BJ (cell line): ENCODE measurements at regions of chr5 and their contacts with region 1.

Region 1: DNA sequence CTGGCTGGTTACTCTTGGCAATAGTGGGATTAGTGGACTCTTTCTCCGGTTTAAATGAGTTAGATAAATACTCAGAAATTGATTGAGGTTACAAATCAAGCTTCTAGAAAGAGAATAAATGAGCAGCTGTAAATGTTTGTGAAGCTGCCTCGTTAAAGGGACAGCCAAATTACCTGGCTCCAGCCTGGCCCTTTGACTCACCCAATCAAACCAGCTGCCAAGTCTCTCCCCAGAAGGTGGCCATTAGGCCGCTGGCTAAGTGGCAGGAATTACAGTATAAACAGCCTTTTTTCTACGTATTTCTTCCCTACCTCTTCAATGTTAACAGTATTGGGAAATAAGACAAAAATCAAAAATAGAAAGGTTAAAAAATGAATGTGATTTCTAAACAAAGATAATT is 46.0 kb upstream of the SRFBP1 start:
- DNase-seq: no peak
- H3K4me3 ChIP-seq: no peak overlapping the region
- H3K27me3 ChIP-seq: no peaks in the 10 kb centered on the region
- CTCF ChIP-seq: no peak

Region 2: GRCh38 chr5:121658221-121658620 is 257.5 kb before region 1 on chr5:
- CTCF ChIA-PET with region 1: no interaction called
- POLR2A ChIA-PET with region 1: interaction called, 10 read pairs
- DNase-seq: no peak
- H3K4me3 ChIP-seq: no peak overlapping the region
- H3K27me3 ChIP-seq: no peaks in the 10 kb centered on the region
- CTCF ChIP-seq: no peak

Region 3: DNA sequence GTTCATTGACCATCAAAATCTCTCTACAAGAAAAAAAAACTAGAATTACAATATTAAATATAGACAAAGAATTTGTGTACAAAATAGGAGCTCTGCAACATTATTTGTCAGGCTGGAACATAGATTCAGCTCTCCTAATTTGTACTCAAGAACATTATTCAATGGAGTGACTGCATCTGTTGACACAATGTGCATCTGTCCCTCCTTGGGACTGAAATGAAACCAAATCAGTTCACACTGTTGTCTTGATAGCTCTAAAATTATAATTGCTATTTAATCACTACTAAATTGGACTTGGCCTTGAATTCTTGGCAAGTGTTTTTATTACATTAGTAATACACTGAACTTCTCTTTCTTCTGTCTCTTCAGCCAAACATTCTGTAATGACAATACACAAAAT is 16.4 kb before region 1 on chr5:
- CTCF ChIA-PET with region 1: no interaction called
- POLR2A ChIA-PET with region 1: no interaction called
- DNase-seq: no peak
- H3K4me3 ChIP-seq: no peak overlapping the region
- H3K27me3 ChIP-seq: no peaks in the 10 kb centered on the region
- CTCF ChIP-seq: no peak

Region 4: GRCh38 chr5:122392824-122393223 is 477.1 kb after region 1 on chr5:
- CTCF ChIA-PET with region 1: no interaction called
- POLR2A ChIA-PET with region 1: no interaction called
- DNase-seq: peak; percentile 23
- H3K4me3 ChIP-seq: no peak overlapping the region
- H3K27me3 ChIP-seq: no peaks in the 10 kb centered on the region
- CTCF ChIP-seq: no peak